ENCODE measurements at regions of chr12 and their contacts with region 1.

Region 1: GRCh38 chr12:2812290-2813213 is at the start of gene ITFG2:
- DNase-seq: peak; percentile 98 to 100 (median 99)
- ATAC-seq: peak; percentile 98 to 99 (median 99)
- H3K4me3 ChIP-seq: peak within 1 kb of the TSS; percentile 53 to 90 (median 72)
- H3K27ac ChIP-seq: peak within 1 kb of the TSS; percentile 77 to 98 (median 95)
- H3K4me1 ChIP-seq: peaks cover 0 to 23% (median 17%) of the 10 kb centered on the region in 12 donors
- H3K27me3 ChIP-seq: no peaks in the 10 kb centered on the region
- CTCF ChIP-seq: no peak
- POLR2A ChIP-seq: peak in 1 of 2 donors; percentile 89
- total RNA-seq, gene ITFG2: 7.6 to 21.7 (median 12.1) TPM

Region 2: DNA sequence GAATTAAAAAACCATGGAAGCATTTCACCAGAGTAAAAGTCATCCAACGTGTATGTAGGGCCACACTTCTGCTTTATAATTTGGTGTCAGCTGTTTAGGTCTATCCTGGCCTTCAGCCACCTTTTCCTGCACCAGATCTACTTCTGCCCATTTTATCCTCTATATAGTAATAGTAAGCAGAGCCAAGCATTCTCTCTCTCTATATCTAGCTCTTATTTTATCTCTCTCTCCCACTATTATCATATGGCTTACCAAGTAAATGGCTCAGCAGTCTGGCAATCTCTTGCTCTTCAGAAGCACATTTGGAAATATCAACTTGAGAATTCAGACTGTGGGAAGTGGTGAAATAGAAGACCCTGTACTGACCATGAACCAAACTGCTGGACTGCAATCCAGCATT is 101.9 kb before region 1 on chr12:
- intact Hi-C with region 1: no loop called
- DNase-seq: no peak
- ATAC-seq: no peak
- H3K4me3 ChIP-seq: no peak overlapping the region
- H3K27ac ChIP-seq: no peak overlapping the region
- H3K4me1 ChIP-seq: no peaks in the 10 kb centered on the region
- H3K27me3 ChIP-seq: peaks cover 0 to 8% (median 0%) of the 10 kb centered on the region in 9 donors
- CTCF ChIP-seq: no peak
- POLR2A ChIP-seq: no peak

Region 3: GRCh38 chr12:2794736-2795289 is 17.7 kb before region 1 on chr12 and contains the start of gene FKBP4:
- intact Hi-C with region 1: loop called in 3 of 10 experiments (anchors 2 kb)
- DNase-seq: peak; percentile 92 to 94 (median 93)
- ATAC-seq: peak; percentile 82 to 94 (median 91)
- H3K4me3 ChIP-seq: peak within 1 kb of the TSS; percentile 71 to 95 (median 86)
- H3K27ac ChIP-seq: peak within 1 kb of the TSS in 11 of 12 donors; percentile 68 to 89 (median 81)
- H3K4me1 ChIP-seq: peaks cover 0 to 42% (median 27%) of the 10 kb centered on the region in 12 donors
- H3K27me3 ChIP-seq: peaks cover 0 to 4% (median 0%) of the 10 kb centered on the region in 9 donors
- CTCF ChIP-seq: no peak
- POLR2A ChIP-seq: peak in 1 of 2 donors; percentile 89
- total RNA-seq, gene FKBP4: 25.8 to 76.2 (median 44.0) TPM